Ascending aorta (tissue), 2 donors: ENCODE measurements at regions of chr6 and their contacts with region 1.

Region 1: GRCh38 chr6:143677891-143678791 is at the start of gene PHACTR2:
- DNase-seq: peak; percentile 47 to 92
- H3K4me3 ChIP-seq: peak within 1 kb of the TSS; percentile 72 to 92
- H3K27ac ChIP-seq: peak within 1 kb of the TSS; percentile 95 to 98
- H3K4me1 ChIP-seq: peaks cover 4 to 29% of the 10 kb centered on the region in 2 donors
- H3K27me3 ChIP-seq: no peaks in the 10 kb centered on the region
- CTCF ChIP-seq: no peak
- total RNA-seq, gene PHACTR2: 112 TPM

Region 2: GRCh38 chr6:143575440-143575839 is 102.7 kb before region 1 on chr6:
- intact Hi-C with region 1: loop called (anchors 2 kb)
- DNase-seq: peak in 1 of 2 donors; percentile 72
- H3K4me3 ChIP-seq: no peak overlapping the region
- H3K27ac ChIP-seq: no peak overlapping the region
- H3K4me1 ChIP-seq: peaks cover 3 to 5% of the 10 kb centered on the region in 2 donors
- H3K27me3 ChIP-seq: no peaks in the 10 kb centered on the region
- CTCF ChIP-seq: peak; percentile 81 to 90 (median 90)

Region 3: GRCh38 chr6:143745166-143746133 is 67.3 kb after region 1 on chr6:
- intact Hi-C with region 1: loop called (anchors 2 kb)
- DNase-seq: peak in 1 of 2 donors; percentile 70
- H3K4me3 ChIP-seq: peak overlapping the region; percentile 41 to 44
- H3K27ac ChIP-seq: peak overlapping the region; percentile 80 to 86
- H3K4me1 ChIP-seq: peaks cover 9 to 39% of the 10 kb centered on the region in 2 donors
- H3K27me3 ChIP-seq: no peaks in the 10 kb centered on the region
- CTCF ChIP-seq: no peak

Region 4: DNA sequence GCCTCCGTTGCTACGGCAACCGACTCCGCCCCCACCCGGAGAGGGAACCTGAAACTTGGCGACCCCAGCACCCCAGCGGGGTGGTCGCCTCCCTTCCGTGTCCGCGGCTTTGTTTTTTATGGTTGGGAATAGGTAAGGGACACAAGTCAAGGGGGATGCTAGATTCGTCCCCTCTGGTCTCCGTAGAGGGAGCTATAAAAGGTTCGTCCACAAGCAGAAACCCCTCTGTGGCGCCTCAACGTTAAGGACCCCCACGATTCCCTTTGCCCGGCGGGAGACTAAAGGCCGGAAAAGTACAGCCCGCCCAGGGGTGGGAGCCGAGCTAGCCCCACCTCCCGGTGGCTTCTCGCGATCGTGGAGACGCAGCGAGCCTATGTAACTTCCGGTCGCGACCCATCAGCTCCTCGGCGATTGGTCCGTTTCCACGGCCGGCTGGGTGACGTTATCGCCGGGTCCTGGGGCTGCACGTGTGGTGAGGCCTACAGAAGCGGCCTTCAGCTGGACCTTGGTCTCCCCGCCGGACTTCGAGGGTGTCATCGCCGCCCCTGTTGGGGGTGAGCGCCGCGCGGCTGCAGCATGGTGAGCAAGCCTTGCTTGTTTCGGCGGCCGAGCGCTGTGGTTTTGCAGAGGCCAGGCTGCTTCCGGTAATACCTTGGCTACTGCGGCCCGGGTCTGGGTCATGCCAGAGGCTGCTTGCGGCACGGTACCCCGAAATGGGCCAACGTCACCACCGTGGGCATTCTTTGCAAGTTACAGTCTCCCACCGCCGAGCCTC is 164.9 kb after region 1 on chr6 and contains the start of gene LTV1:
- intact Hi-C with region 1: loop called (anchors 1 kb)
- DNase-seq: peak; percentile 82 to 98
- H3K4me3 ChIP-seq: peak within 1 kb of the TSS; percentile 76 to 79
- H3K27ac ChIP-seq: peak within 1 kb of the TSS; percentile 92 to 96
- H3K4me1 ChIP-seq: peaks cover 4 to 17% of the 10 kb centered on the region in 2 donors
- H3K27me3 ChIP-seq: no peaks in the 10 kb centered on the region
- CTCF ChIP-seq: no peak
- total RNA-seq, gene LTV1: 4.6 TPM

Region 5: GRCh38 chr6:144013486-144013909 is 335.4 kb after region 1 on chr6:
- intact Hi-C with region 1: loop called (anchors 5 kb)
- DNase-seq: peak in 1 of 2 donors; percentile 87
- H3K4me3 ChIP-seq: no peak overlapping the region
- H3K27ac ChIP-seq: no peak overlapping the region
- H3K4me1 ChIP-seq: no peaks in the 10 kb centered on the region
- H3K27me3 ChIP-seq: no peaks in the 10 kb centered on the region
- CTCF ChIP-seq: peak; percentile 82 to 92 (median 89)

Region 6: DNA sequence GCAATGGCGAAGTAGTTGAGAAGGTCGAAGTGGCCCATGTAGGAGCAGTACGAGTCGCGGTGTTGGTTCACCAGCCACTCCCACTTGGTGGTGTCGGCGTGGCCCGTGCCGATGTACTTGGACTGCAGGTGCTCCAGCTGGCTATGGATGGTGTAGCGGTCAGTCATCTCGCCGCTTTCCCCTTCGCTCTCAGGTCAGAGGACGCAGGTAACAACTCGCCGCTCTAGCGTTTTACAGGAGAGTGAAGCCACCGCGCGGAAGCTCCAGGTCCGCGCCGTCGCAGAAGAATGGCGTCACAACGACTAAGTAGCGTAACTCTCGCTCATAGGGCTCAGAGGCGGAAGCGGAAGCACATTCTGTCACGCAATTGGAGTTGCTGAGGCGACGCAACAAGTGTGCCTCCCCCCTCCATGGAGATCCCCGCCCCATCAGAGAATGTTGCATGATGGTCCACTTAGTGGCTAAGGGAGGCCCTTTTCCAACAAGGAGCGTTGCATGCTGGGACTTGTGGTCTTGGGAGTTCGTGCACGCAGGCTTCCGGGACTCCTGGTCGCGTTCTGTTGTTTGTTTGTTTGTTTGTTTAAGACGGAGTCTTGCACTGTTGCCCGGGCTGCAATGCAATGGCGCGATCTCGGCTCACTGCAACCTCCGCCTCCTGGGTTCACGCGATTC is 417.3 kb after region 1 on chr6 and contains the start of gene SF3B5:
- intact Hi-C with region 1: loop called (anchors 5 kb)
- DNase-seq: peak; percentile 97 to 99
- H3K4me3 ChIP-seq: peak within 1 kb of the TSS; percentile 77 to 95
- H3K27ac ChIP-seq: peak within 1 kb of the TSS; percentile 80 to 82
- H3K4me1 ChIP-seq: peaks cover 5 to 17% of the 10 kb centered on the region in 2 donors
- H3K27me3 ChIP-seq: no peaks in the 10 kb centered on the region
- CTCF ChIP-seq: no peak
- total RNA-seq, gene SF3B5: 123 TPM